BJ (cell line): ENCODE measurements at regions of chr11 and their contacts with region 1.

Region 1: DNA sequence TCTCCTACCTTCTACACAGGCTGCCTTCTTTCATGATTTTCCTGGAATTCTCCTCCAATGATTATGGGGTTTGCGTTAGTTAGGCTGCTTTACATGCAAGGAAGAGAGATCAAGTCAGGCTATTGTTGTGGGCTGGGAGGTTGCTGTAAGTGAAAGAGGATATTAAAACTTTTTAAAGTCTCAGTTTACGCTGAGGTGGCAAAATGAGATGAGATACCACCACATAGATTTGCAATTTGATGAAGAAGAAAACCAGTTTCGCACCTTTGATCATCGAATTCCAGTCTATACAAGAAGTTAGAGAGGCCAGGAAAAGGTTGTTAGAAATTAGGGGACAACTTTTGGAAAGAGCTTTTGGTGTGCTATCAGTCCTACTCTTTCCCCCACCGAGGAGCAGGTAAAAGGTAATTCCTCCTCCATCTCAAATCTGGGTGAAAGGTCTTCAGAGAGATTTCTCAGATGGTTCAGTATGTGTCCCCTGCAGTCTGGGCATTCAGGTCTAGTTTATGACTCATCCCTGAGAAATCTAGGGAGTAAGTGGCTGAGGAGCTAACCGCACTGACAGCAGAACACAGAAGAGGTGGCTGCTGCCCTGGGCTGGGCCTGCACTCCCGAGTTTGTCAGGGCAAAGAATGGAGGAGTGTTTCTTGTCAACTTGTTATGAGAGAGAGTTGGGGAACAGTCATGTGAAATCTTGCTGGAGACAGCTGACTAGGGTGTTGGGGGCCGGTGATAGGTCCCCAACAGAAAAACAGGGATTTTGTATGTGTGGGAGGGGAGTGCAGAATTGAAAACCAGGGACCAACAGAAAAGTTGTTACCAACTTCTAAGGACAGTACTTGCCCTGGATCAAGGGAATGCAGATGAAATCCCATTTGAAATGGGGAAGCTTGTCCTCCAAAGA is 34.7 kb downstream of the CCDC83 start:
- DNase-seq: no peak
- H3K4me3 ChIP-seq: no peak overlapping the region
- H3K27me3 ChIP-seq: no peaks in the 10 kb centered on the region
- CTCF ChIP-seq: no peak

Region 2: DNA sequence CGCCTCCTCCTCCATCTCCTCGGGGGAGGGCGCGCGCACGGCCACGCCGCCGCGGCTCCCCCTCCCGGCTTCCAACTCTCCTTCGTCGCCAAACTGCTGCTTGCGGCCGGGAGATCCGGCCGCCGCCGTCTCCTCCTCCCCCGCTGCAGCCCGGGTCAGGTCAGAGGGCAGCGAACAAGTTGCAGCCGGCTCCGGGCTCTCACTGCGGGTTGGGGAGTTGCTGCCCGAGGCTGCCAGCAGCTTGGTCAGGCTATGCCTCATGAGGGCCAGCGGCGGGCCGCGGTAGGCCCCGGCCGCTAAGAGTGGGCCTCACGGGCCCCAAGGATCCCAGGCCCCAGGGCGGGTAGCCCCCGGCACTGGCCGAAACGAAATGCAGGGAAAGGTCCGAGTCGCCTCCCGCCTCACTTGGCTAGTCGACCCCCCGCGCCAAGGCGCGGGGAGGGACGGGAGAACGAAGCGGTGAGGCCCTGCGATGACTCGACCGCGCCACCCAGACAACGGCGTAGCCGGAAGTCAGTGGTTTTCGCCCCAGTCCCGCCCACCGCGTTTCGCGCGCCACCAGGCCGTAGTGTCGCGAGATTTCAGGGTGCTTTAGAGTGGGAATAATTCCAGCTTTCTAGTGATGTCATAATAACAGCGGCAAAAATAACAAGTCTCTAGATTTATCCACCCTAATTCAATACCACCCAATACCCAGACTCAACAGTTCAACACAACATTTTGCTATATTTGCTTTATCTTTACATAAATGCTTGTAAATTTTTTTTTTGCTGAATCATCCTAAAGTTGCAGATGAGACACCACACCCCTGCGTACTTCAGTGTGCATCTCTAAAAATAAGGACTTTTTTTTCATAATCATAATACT is 225.1 kb before region 1 on chr11 and contains the start of gene CREBZF:
- CTCF ChIA-PET with region 1: no interaction called
- POLR2A ChIA-PET with region 1: interaction called, 13 read pairs
- DNase-seq: peak; percentile 55
- H3K4me3 ChIP-seq: peak within 1 kb of the TSS; percentile 98
- H3K27me3 ChIP-seq: no peaks in the 10 kb centered on the region
- CTCF ChIP-seq: no peak
- polyA plus RNA-seq, gene CREBZF: 15.4 and 18.8 TPM in 2 replicates

Region 3: GRCh38 chr11:86696004-86696403 is 806.1 kb after region 1 on chr11:
- CTCF ChIA-PET with region 1: no interaction called
- POLR2A ChIA-PET with region 1: interaction called, 18 read pairs
- DNase-seq: peak; percentile 87
- H3K4me3 ChIP-seq: no peak overlapping the region
- H3K27me3 ChIP-seq: no peaks in the 10 kb centered on the region
- CTCF ChIP-seq: no peak